HepG2 (cell line): ENCODE measurements at regions of chr2 and their contacts with region 1.

Region 1: DNA sequence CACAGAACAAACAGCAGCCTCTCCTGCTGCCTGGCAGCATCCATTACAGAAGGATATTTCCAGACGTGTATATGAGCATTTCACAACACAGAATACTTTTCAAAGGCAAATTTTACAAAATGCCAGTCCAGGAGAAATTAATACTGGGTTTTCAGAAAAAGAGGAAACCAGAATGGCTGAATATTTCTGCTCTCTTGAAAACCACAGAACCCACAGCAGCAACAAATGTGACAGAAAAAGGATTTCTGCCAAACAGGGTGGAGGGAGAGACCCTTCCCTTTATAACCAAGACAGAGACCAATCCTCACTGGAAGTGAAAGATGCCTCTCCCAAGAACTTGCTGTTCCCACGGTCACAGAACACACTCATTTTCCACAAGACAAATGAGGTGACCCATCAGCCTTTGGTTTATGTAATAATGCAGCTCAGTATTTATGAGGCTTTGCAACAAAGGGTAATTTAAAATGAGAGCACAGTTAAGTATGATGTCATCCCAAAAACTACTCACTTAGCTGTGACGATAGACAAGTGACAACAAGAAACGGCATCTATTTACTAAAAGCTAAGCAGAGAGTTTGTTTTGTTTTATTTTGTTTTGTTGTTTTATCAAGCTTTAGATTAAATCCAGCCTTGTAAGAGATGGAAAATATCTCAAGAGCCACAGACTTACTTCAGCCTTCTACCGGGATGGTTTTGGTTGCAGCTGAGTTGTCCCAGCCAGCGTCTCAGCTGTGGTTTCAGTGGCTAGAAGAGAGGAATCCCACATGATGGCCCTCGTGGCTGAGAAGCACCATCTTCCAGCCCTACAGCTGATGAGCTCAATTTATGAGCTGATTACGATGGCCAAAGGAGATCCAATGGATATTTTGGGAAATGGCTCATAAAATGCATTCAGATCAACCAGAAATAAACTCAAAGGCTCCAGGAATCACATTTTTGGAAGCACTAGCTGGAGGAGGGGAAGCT is 249.3 kb upstream of the AGAP1 start:
- DNase-seq: no peak
- ATAC-seq: no peak
- H3K4me3 ChIP-seq: no peak overlapping the region
- H3K27ac ChIP-seq: no peak overlapping the region
- H3K4me1 ChIP-seq: no peaks in the 10 kb centered on the region
- H3K27me3 ChIP-seq: peaks cover 8 to 49% of the 10 kb centered on the region in 2 experiments; a peak in 4 of 5 replicates
- CTCF ChIP-seq: no peak
- EP300 ChIP-seq: no peak
- POLR2A ChIP-seq: no peak
- RAD21 ChIP-seq: no peak

Region 2: DNA sequence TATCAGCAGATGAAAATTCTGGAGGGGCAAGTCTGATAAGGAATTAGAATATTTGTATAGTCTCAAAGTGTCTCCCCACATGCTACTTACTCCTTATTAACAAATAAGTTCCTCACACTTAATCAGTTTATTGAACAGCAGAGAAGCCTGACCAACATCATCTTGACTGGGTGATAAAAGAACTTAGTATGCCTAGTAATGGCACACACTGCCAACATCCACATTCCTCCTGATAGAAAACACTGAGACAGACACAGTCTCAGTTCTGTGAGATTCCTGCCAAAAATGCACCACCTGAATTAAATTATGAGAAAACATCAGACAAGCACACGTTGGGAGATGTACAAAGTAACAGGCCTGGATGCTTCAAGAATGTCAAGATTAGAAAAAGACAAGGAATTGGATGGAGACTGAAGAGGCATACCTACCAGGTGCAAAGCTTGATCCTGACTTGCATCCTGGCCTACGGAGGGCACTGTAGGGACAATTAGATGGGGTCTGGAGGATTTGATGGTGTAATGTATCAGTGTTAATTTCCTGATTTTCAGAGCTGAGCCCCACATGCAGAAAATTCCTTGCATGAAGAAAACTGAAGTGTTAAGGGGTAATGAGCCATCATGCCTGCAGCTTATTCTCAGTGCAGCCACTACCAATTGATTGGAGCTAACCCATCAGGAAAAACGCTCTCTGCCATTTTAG is 493.1 kb before region 1 on chr2:
- CTCF ChIA-PET with region 1: no interaction called
- POLR2A ChIA-PET with region 1: no interaction called
- in situ Hi-C with region 1: no loop called
- intact Hi-C with region 1: no loop called
- DNase-seq: no peak
- ATAC-seq: 0 out of 3 replicates have a peak, but pooled peaks have one; percentile 35
- H3K4me3 ChIP-seq: no peak overlapping the region
- H3K27ac ChIP-seq: no peak overlapping the region
- H3K4me1 ChIP-seq: peaks cover 16% of the 10 kb centered on the region
- H3K27me3 ChIP-seq: no peaks in the 10 kb centered on the region
- CTCF ChIP-seq: peak; percentile 55
- EP300 ChIP-seq: no peak
- POLR2A ChIP-seq: no peak
- RAD21 ChIP-seq: no peak

Region 3: DNA sequence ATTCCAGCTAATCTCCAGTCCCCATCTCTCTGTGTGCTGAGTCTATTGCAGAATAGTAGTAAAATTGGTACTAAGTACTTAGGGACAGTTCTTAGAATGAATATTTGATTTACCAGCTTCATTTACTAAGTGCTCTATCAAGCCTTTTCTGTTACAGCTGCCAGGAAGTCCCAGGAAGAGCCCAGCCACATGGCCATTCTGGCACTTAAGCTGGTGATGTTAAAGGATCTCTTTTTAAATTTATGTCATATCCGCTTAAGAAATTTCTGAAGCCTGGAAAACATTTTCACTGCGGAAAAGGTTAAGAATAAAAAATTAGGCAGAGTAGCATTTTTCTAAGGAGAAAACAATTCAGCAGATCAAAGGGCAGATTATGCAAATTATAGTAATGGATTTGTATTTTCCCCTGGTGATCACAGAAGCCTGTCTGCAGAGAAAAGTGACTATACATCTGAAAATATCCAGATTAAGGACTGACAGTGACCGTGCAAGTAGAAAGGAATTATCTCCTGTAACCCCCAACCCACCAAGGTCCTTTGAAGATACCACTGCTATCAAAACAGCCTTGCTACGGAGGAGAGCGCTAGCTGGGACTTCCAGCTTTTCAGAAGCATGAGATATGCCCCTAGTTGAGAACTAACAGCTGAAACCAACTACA is 31.9 kb before region 1 on chr2:
- CTCF ChIA-PET with region 1: no interaction called
- POLR2A ChIA-PET with region 1: no interaction called
- in situ Hi-C with region 1: no loop called
- intact Hi-C with region 1: loop called (anchors 1 kb)
- DNase-seq: no peak
- ATAC-seq: no peak
- H3K4me3 ChIP-seq: no peak overlapping the region
- H3K27ac ChIP-seq: no peak overlapping the region
- H3K4me1 ChIP-seq: no peaks in the 10 kb centered on the region
- H3K27me3 ChIP-seq: peaks cover 4 to 39% of the 10 kb centered on the region in 2 experiments; a peak in 4 of 5 replicates
- CTCF ChIP-seq: no peak
- EP300 ChIP-seq: no peak
- POLR2A ChIP-seq: no peak
- RAD21 ChIP-seq: no peak

Region 4: DNA sequence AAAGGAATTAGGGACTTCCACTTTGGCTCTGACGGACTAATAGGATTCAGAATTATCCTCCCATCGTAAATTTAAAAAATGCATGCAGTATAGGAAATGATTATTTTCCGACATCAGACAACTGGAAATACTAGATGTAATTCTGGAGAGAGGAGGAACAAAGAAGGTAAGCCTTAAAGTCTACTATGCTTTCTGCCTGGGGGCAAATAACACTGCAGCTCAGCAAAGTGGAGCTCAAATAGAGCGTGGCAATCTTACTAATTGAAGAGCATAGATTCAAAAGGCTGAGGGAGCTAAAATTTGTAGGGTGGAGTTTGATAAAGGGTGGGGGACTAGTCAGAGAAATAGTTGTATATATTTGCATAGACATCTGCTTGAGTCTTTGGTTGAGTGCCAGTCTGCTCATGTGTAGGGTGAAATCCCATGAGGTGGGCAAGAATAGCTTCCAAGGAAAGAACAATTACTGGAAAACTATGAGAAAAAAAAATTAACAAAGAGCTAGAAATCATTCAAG is 1864.9 kb after region 1 on chr2:
- CTCF ChIA-PET with region 1: no interaction called
- POLR2A ChIA-PET with region 1: no interaction called
- in situ Hi-C with region 1: no loop called
- intact Hi-C with region 1: loop called (anchors 5 kb)
- DNase-seq: no peak
- ATAC-seq: no peak
- H3K4me3 ChIP-seq: no peak overlapping the region
- H3K27ac ChIP-seq: no peak overlapping the region
- H3K4me1 ChIP-seq: no peaks in the 10 kb centered on the region
- H3K27me3 ChIP-seq: no peaks in the 10 kb centered on the region
- CTCF ChIP-seq: no peak
- EP300 ChIP-seq: no peak
- POLR2A ChIP-seq: no peak
- RAD21 ChIP-seq: no peak